Ovary (tissue), 10 donors: ENCODE measurements at regions of chr4 and their contacts with region 1.

Region 1: GRCh38 chr4:147480891-147481576 is at the start of gene EDNRA:
- DNase-seq: peak; percentile 48 to 72 (median 57)
- H3K4me3 ChIP-seq: peak within 1 kb of the TSS; percentile 61
- H3K27ac ChIP-seq: peak within 1 kb of the TSS; percentile 65 to 81
- H3K4me1 ChIP-seq: peaks cover 4% of the 10 kb centered on the region
- H3K27me3 ChIP-seq: no peaks in the 10 kb centered on the region
- CTCF ChIP-seq: no peak
- EP300 ChIP-seq: no peak
- POLR2A ChIP-seq: no peak
- total RNA-seq, gene EDNRA: 28.4 to 110 (median 61.7) TPM

Region 2: DNA sequence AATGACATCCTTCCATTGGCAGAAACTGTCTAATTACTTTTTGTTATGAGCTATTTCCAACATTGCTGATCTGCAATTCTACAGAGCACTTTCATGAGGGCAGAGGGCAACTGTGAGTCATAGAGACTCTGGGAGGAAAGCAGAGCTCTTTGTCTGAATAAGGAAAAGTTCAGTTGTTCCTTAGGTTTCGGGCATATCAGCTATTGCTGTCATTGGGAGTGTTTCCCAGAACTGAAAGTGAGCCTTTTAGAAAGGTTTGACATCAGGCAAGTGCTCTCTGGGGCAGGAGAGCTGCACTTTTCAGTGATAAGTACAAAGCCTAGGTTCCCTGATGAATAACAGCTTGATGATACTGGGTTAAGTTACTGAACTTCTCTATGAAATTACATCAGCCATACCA is 119.3 kb before region 1 on chr4:
- intact Hi-C with region 1: loop called in 1 of 4 experiments (anchors 10 kb)
- DNase-seq: peak in 4 of 5 donors; percentile 53 to 80 (median 74)
- H3K4me3 ChIP-seq: no peak overlapping the region
- H3K27ac ChIP-seq: peak overlapping the region; percentile 42 to 97
- H3K4me1 ChIP-seq: peaks cover 14% of the 10 kb centered on the region
- H3K27me3 ChIP-seq: no peaks in the 10 kb centered on the region
- CTCF ChIP-seq: no peak
- EP300 ChIP-seq: peak; percentile 84
- POLR2A ChIP-seq: no peak

Region 3: DNA sequence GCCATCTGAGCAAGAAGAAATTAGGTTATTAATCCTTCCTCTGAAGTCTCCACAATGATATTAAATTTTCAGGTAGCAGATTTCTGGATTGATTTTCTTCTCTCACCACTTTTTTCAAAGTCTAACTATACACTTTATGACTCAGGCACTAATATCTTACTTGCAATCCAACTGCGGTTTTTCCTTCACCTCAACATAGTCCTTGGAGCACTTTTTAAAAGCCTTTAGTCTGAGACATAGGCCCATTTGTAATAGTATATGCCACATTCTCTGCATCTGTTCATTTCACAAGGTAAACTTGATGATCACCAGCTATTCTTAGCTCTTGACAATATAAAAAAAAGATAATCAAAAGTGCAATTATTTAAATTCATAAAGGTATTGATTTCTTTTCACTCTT is 56.0 kb before region 1 on chr4:
- intact Hi-C with region 1: no loop called
- DNase-seq: no peak
- H3K4me3 ChIP-seq: no peak overlapping the region
- H3K27ac ChIP-seq: no peak overlapping the region
- H3K4me1 ChIP-seq: no peaks in the 10 kb centered on the region
- H3K27me3 ChIP-seq: no peaks in the 10 kb centered on the region
- CTCF ChIP-seq: no peak
- EP300 ChIP-seq: no peak
- POLR2A ChIP-seq: no peak

Region 4: GRCh38 chr4:147693218-147693617 is 212.2 kb after region 1 on chr4:
- intact Hi-C with region 1: no loop called
- DNase-seq: no peak
- H3K4me3 ChIP-seq: no peak overlapping the region
- H3K27ac ChIP-seq: no peak overlapping the region
- H3K4me1 ChIP-seq: no peaks in the 10 kb centered on the region
- H3K27me3 ChIP-seq: no peaks in the 10 kb centered on the region
- CTCF ChIP-seq: no peak
- EP300 ChIP-seq: no peak
- POLR2A ChIP-seq: no peak